PC-9 (cell line): ENCODE measurements at regions of chr2 and their contacts with region 1.

Region 1: DNA sequence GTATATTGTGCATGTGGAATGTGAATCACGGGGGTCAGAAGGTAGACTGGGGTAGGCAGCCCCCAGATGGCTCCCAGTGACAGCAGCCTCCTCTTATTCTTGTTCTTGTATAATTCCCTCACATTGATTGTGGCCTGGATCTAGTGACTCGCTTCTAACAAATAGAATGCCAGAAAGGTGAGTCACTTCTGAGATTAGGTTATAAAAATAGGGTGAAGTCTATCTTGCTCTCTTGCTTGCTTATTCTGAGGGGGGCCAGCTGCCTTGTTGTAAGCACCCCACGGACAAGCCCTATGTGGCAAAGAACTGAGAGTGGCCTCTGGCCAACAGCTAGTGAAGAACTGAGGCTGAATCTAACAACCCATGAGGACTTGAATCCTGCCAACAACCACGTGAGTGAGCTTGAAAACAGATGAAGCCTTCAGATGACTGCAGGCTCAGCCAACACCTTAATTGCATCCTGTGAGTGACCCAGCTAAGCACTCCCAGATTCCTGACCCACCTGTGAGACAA is 15.6 kb upstream of the RMND5A start:
- DNase-seq: peak; percentile 60 to 88
- H3K4me3 ChIP-seq: peak overlapping the region; percentile 47; the same call in 1 of the 2 replicates
- H3K27ac ChIP-seq: peak overlapping the region; percentile 86
- H3K4me1 ChIP-seq: peaks cover 34% of the 10 kb centered on the region
- H3K27me3 ChIP-seq: no peaks in the 10 kb centered on the region
- CTCF ChIP-seq: no peak

Region 2: DNA sequence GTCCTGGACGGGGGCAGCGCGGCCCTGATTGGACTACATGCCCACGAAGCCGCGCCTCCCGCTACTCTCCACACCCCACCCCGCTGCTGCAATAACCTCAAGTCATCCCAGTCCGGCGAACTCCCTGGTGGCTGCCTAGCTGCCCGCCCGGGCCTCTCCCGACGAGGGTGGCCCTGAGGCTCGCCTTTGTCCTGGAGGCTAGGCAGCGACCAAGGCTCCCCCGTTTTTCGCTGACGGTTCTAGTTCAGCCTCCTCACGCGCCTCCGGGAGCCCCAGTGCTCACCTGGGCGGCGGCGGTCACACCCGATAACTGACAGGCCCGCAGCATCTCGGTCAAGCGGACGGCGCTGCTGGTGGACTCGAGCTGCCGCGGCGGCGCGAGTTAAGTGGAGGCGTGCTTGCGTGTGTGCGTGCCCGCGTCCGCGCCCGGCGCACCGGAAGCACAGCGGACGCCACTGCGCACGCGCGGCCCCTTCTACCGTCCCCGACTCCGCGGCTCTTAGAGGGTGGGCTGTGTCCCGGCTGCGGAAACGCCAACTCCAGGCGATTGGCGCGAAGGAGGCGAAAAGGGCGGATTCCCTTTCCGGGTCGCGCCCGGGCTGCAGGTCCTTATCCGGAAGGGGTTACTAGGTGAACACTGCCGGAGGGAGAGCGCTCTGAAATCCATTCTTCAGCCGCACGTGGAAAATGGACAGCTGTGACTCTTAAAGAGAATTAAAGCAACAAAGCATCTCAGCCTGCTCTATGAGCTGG is 509.3 kb before region 1 on chr2 and contains the start of gene IMMT:
- CTCF ChIA-PET with region 1: no interaction called
- POLR2A ChIA-PET with region 1: no interaction called
- intact Hi-C with region 1: loop called (anchors 10 kb)
- DNase-seq: peak; percentile 89 to 96
- H3K4me3 ChIP-seq: peak within 1 kb of the TSS; percentile 93
- H3K27ac ChIP-seq: peak within 1 kb of the TSS; percentile 97
- H3K4me1 ChIP-seq: peaks cover 38% of the 10 kb centered on the region
- H3K27me3 ChIP-seq: no peaks in the 10 kb centered on the region
- CTCF ChIP-seq: no peak
- total RNA-seq, gene IMMT: 108 and 114 TPM in 2 replicates

Region 3: GRCh38 chr2:86808315-86809161 is 104.0 kb after region 1 on chr2:
- CTCF ChIA-PET with region 1: no interaction called
- POLR2A ChIA-PET with region 1: no interaction called
- intact Hi-C with region 1: no loop called
- DNase-seq: peak; percentile 81 to 93
- H3K4me3 ChIP-seq: peak overlapping the region; percentile 71
- H3K27ac ChIP-seq: no peak overlapping the region
- H3K4me1 ChIP-seq: peaks cover 7% of the 10 kb centered on the region; the same call in 1 of the 2 replicates
- H3K27me3 ChIP-seq: no peaks in the 10 kb centered on the region
- CTCF ChIP-seq: peak; percentile 94